Activated naive CD4-positive, alpha-beta T cell treated with anti-CD3 and anti-CD28 coated beads for 36 hours (primary cell): ENCODE measurements at regions of chr1 and their contacts with region 1.

Region 1: GRCh38 chr1:158998781-158999161 is 10.9 kb upstream of the IFI16 start:
- DNase-seq: peak; percentile 60
- H3K4me3 Mint-ChIP-seq: no peak overlapping the region
- H3K27ac Mint-ChIP-seq: no peak overlapping the region
- H3K4me1 Mint-ChIP-seq: peaks cover 30% of the 10 kb centered on the region
- H3K27me3 Mint-ChIP-seq: no peaks in the 10 kb centered on the region

Region 2: GRCh38 chr1:158203693-158204457 is 794.9 kb before region 1 on chr1:
- CTCF ChIA-PET with region 1: interaction called, 3 read pairs
- intact Hi-C with region 1: loop called (anchors 1 kb)
- DNase-seq: peak; percentile 23
- H3K4me3 Mint-ChIP-seq: no peak overlapping the region
- H3K27ac Mint-ChIP-seq: no peak overlapping the region
- H3K4me1 Mint-ChIP-seq: peaks cover 4% of the 10 kb centered on the region
- H3K27me3 Mint-ChIP-seq: peaks cover 25% of the 10 kb centered on the region

Region 3: DNA sequence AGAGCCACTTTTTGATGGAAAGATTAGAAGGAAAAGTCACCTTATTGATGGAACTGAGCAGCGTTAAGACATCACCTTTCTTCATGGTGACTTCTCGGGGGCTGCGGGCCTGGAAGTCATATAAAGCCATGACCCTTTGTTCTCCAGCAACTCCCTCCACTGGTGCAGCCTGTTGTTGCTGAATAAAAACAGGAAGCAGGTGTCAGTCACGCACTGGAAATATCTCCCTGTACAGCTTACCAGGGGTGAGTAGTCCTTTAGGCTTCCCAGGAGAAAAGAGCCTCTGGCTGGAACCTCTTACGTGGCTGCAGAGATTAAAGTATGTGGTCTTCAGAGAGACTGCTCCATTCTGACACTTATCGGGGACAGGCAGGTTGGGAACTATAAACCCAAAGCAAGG is 344.2 kb before region 1 on chr1:
- CTCF ChIA-PET with region 1: interaction called, 3 read pairs
- intact Hi-C with region 1: loop called (anchors 5 kb)
- DNase-seq: no peak
- H3K4me3 Mint-ChIP-seq: no peak overlapping the region
- H3K27ac Mint-ChIP-seq: no peak overlapping the region
- H3K4me1 Mint-ChIP-seq: peaks cover 5% of the 10 kb centered on the region
- H3K27me3 Mint-ChIP-seq: peaks cover 3% of the 10 kb centered on the region

Region 4: DNA sequence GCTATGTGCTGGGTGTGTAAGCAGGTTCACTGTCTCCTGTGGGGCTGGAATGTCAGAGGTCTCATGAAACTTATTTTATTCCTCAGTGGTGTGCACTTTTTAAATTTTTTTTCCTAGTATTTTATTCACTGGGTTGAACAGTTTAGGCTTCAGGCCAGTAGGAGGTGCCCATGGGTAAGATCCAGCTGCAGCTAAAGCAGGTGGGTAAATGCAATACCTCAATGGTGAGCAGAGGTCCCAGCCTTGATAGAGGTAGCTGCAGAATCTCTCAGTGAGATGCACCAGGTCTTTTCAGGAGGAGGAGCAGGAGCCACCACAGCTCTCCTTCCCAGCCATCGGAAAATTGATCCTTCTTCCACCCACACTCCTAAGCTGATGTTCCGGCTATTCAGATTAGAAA is 205.2 kb before region 1 on chr1:
- CTCF ChIA-PET with region 1: interaction called, 9 read pairs
- intact Hi-C with region 1: loop called (anchors 1 kb)
- DNase-seq: peak; percentile 47
- H3K4me3 Mint-ChIP-seq: no peak overlapping the region
- H3K27ac Mint-ChIP-seq: no peak overlapping the region
- H3K4me1 Mint-ChIP-seq: no peaks in the 10 kb centered on the region
- H3K27me3 Mint-ChIP-seq: peaks cover 2% of the 10 kb centered on the region

Region 5: DNA sequence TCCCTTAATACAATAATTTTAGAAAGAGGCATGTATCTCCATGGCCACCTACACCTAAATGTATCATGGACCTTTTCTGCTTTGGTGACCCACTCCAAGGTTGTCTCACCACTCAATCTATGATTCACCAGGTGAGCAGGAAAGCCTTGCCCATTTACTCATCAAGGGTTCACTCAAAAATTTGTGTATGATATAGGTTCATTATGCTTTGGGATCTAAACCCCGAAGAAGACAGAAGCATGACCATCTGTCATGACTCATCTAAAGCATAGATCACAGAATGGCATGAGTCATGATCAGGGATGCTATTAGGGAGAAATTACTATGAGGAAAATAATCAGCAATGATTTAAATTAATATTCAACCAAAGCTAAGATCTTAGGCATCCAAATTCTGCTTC is 28.9 kb before region 1 on chr1:
- CTCF ChIA-PET with region 1: no interaction called
- intact Hi-C with region 1: loop called (anchors 1 kb)
- DNase-seq: peak; percentile 30
- H3K4me3 Mint-ChIP-seq: no peak overlapping the region
- H3K27ac Mint-ChIP-seq: peak overlapping the region; percentile 89
- H3K4me1 Mint-ChIP-seq: peaks cover 35% of the 10 kb centered on the region
- H3K27me3 Mint-ChIP-seq: peaks cover 5% of the 10 kb centered on the region